PC-3 (cell line): ENCODE measurements at regions of chr1 and their contacts with region 1.

Region 1: GRCh38 chr1:200510228-200510623 is 100.4 kb upstream of the ZNF281 start:
- DNase-seq: peak; percentile 99
- ATAC-seq: peak; percentile 82
- H3K4me3 ChIP-seq: peak overlapping the region; percentile 55; the same call in 1 of the 2 replicates
- H3K27ac ChIP-seq: no peak overlapping the region
- H3K4me1 ChIP-seq: peaks cover 16% of the 10 kb centered on the region
- H3K27me3 ChIP-seq: no peaks in the 10 kb centered on the region
- CTCF ChIP-seq: peak; percentile 100

Region 2: DNA sequence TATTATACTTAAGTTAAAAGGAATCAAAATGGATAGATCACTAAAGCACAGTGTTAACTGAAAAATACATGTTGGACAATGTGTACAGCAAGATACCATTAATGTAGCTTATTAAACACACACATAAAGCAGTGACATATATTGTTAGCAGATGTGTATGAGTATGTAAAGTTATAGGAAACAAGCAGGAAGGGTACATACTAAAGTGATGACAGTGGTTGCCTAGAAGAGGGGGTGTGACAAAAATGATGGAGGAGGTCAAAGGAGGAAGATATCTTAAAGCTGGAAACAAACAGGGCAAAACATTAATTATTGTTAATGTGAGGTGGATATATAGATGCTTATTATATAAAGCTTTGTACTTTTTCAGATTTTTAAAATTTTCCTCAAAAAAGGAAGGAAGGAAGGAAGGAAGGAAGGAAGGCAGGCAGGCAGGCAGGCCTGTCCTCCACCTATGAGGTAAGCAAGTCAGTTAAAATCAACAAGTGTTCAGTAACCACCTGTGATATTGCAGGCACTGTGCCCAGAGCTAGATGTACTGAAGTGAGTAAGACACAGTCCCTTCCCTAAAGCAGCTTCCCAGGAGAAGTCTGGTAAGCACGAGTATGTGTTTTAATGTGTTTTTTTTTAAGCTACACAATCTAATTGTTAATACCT is 735.7 kb before region 1 on chr1:
- CTCF ChIA-PET with region 1: no interaction called
- POLR2A ChIA-PET with region 1: no interaction called
- intact Hi-C with region 1: loop called (anchors 10 kb)
- DNase-seq: peak; percentile 97
- ATAC-seq: peak; percentile 99
- H3K4me3 ChIP-seq: no peak overlapping the region
- H3K27ac ChIP-seq: no peak overlapping the region
- H3K4me1 ChIP-seq: peaks cover 9% of the 10 kb centered on the region
- H3K27me3 ChIP-seq: no peaks in the 10 kb centered on the region
- CTCF ChIP-seq: no peak

Region 3: GRCh38 chr1:199954699-199955098 is 555.5 kb before region 1 on chr1:
- CTCF ChIA-PET with region 1: no interaction called
- POLR2A ChIA-PET with region 1: no interaction called
- intact Hi-C with region 1: loop called (anchors 10 kb)
- DNase-seq: peak; percentile 67
- ATAC-seq: peak; percentile 87
- H3K4me3 ChIP-seq: no peak overlapping the region
- H3K27ac ChIP-seq: no peak overlapping the region
- H3K4me1 ChIP-seq: no peaks in the 10 kb centered on the region
- H3K27me3 ChIP-seq: no peaks in the 10 kb centered on the region
- CTCF ChIP-seq: peak; percentile 97

Region 4: DNA sequence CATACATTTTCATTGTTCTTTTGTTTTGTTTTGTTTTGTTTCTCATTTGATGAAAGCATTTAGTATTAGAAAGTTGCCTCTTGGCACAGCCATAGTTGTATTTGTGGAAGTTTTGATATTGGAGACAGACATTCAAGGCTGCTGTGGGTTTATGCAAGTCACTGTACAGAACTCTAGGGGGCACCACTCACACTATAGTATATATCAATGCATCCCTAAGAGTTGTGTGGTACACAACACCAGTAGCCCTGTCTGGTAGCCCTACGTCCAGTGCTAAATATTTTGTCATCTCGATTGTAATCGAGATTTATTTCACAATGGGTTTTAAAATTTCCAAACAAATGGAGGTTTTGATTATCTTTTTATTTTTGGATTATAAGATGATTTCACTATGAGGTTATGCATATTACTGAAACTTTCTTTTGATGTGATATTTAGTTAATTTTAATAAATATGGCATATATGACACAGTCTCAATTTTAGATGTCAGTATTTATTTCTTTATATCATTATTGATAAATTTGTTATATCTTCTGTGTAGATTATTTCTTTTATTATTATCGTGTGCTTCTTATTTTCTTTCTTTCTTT is 370.5 kb before region 1 on chr1:
- CTCF ChIA-PET with region 1: interaction called, 4 read pairs
- POLR2A ChIA-PET with region 1: no interaction called
- intact Hi-C with region 1: loop called (anchors 5 kb)
- DNase-seq: peak; percentile 93
- ATAC-seq: peak; percentile 100
- H3K4me3 ChIP-seq: no peak overlapping the region
- H3K27ac ChIP-seq: no peak overlapping the region
- H3K4me1 ChIP-seq: no peaks in the 10 kb centered on the region
- H3K27me3 ChIP-seq: no peaks in the 10 kb centered on the region
- CTCF ChIP-seq: peak; percentile 100

Region 5: DNA sequence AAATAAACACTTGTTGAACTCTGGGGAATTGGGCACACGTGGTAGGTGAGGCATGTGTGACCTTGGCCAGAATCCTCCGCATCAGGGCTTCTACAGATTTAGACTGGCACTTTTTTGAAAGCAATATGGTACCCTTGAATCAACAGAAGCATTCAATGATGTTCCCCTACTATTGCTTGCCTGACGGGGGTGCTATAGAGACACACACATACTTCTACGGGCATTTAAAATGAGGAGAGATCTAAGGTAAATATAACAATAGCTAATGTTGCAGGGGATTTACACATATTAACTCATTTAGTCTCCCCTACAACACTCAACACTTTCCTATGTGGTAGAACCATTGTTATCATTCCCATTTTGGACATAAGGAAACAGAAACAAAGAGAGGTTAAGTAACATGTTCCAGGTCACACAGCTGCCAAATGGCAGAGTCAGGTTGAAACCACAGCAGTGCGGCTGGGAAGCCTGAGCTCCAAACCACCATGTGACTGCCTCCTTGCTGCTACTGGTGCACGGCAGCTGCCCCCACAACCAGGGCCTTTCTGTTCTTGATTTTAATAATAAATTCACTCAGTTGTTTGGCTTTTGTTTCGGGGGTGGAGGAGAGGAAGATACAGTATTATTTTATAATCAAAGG is 247.8 kb before region 1 on chr1:
- CTCF ChIA-PET with region 1: no interaction called
- POLR2A ChIA-PET with region 1: no interaction called
- intact Hi-C with region 1: no loop called
- DNase-seq: no peak
- ATAC-seq: no peak
- H3K4me3 ChIP-seq: no peak overlapping the region
- H3K27ac ChIP-seq: no peak overlapping the region
- H3K4me1 ChIP-seq: no peaks in the 10 kb centered on the region; the same call in 1 of the 2 replicates
- H3K27me3 ChIP-seq: no peaks in the 10 kb centered on the region
- CTCF ChIP-seq: peak; percentile 54; the same call in 1 of the 2 replicates

Region 6: GRCh38 chr1:200279810-200280411 is 230.3 kb before region 1 on chr1:
- CTCF ChIA-PET with region 1: interaction called, 11 read pairs
- POLR2A ChIA-PET with region 1: no interaction called
- intact Hi-C with region 1: loop called (anchors 1 kb)
- DNase-seq: peak; percentile 99
- ATAC-seq: peak; percentile 88
- H3K4me3 ChIP-seq: no peak overlapping the region
- H3K27ac ChIP-seq: no peak overlapping the region
- H3K4me1 ChIP-seq: no peaks in the 10 kb centered on the region
- H3K27me3 ChIP-seq: no peaks in the 10 kb centered on the region
- CTCF ChIP-seq: peak; percentile 97

Region 7: DNA sequence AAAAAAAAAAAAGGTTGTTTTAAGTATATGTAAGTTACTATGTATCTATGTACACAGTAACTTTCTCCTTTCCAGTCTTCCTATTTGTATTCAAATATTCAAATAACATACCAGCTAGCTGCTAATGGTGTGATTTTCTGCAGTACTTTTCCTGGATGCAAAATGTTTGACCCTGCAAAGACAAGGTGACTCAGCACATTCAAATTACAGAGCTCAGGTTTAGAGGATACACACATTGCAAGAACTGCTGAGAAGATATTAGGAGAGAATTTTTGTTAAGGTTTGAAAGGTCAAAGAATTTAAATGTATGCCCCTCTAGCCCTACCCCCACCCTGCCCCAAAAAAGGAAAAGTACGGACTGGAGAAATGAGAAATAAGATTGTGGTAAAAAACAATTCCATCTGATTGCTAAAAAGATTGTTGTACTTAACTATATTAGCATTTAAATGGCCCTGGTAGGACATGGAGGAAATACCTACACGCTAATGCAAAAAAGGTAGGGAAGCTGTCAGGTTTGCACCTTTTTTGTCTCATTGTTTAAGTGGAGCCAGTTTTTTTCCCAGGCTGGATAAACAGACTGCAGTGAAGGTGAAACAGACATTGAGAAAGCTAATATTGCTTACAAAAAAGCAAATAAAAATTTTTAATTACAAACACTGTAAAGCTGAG is 146.0 kb before region 1 on chr1:
- CTCF ChIA-PET with region 1: interaction called, 15 read pairs
- POLR2A ChIA-PET with region 1: interaction called, 3 read pairs
- intact Hi-C with region 1: no loop called
- DNase-seq: peak; percentile 56
- ATAC-seq: peak; percentile 53
- H3K4me3 ChIP-seq: no peak overlapping the region; the same call in 1 of the 2 replicates
- H3K27ac ChIP-seq: peak overlapping the region; percentile 49
- H3K4me1 ChIP-seq: peaks cover 50% of the 10 kb centered on the region
- H3K27me3 ChIP-seq: no peaks in the 10 kb centered on the region
- CTCF ChIP-seq: no peak

Region 8: GRCh38 chr1:200542162-200542561 is 31.9 kb after region 1 on chr1:
- CTCF ChIA-PET with region 1: no interaction called
- POLR2A ChIA-PET with region 1: no interaction called
- intact Hi-C with region 1: no loop called
- DNase-seq: no peak
- ATAC-seq: no peak
- H3K4me3 ChIP-seq: no peak overlapping the region
- H3K27ac ChIP-seq: no peak overlapping the region
- H3K4me1 ChIP-seq: no peaks in the 10 kb centered on the region
- H3K27me3 ChIP-seq: no peaks in the 10 kb centered on the region
- CTCF ChIP-seq: no peak

Region 9: GRCh38 chr1:200558866-200559459 is 48.7 kb after region 1 on chr1:
- CTCF ChIA-PET with region 1: interaction called, 6 read pairs
- POLR2A ChIA-PET with region 1: no interaction called
- intact Hi-C with region 1: loop called (anchors 1 kb)
- DNase-seq: peak; percentile 84
- ATAC-seq: peak; percentile 92
- H3K4me3 ChIP-seq: no peak overlapping the region
- H3K27ac ChIP-seq: no peak overlapping the region
- H3K4me1 ChIP-seq: no peaks in the 10 kb centered on the region
- H3K27me3 ChIP-seq: no peaks in the 10 kb centered on the region
- CTCF ChIP-seq: peak; percentile 99